ENCODE measurements at regions of chr20 and their contacts with region 1.

Region 1: GRCh38 chr20:44723391-44723790 is 8.2 kb downstream of the CCN5 start:
- DNase-seq: no peak
- CTCF ChIP-seq: no peak

Region 2: GRCh38 chr20:44733341-44734069 is 10.1 kb after region 1 on chr20:
- CTCF ChIA-PET with region 1: interaction called, 13 read pairs
- POLR2A ChIA-PET with region 1: no interaction called
- DNase-seq: peak; percentile 74
- CTCF ChIP-seq: peak; percentile 88

Region 3: GRCh38 chr20:44942264-44942973 is 219.0 kb after region 1 on chr20:
- CTCF ChIA-PET with region 1: no interaction called
- POLR2A ChIA-PET with region 1: no interaction called
- DNase-seq: no peak
- CTCF ChIP-seq: no peak

Measured in GM10248 (cell line).